PC-3 (cell line): ENCODE measurements at regions of chr5 and their contacts with region 1.

Region 1: GRCh38 chr5:40679155-40679913 is 381 bp upstream of the PTGER4 start:
- DNase-seq: peak; percentile 96
- ATAC-seq: peak; percentile 69
- H3K4me3 ChIP-seq: peak overlapping the region; percentile 90
- H3K27ac ChIP-seq: peak overlapping the region; percentile 92
- H3K4me1 ChIP-seq: peaks cover 39% of the 10 kb centered on the region
- H3K27me3 ChIP-seq: no peaks in the 10 kb centered on the region
- CTCF ChIP-seq: no peak

Region 2: DNA sequence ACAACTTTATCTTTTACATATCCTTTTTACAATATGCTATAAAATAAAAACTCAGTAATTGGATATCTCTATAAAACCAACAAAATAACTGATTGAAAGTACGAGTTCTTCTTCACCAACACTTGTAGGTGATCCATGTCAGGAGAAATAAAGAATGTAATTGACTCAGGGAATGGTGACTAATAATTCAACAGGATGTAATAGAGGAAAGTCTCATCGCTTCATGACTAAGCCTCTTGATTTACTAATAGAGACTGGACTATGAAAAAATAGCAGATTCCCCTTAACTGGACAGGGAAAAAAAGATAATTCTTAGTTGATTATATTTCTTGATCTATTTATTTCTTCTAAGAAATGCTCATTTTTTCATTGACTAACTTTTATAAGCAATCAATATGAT is 507.4 kb before region 1 on chr5:
- CTCF ChIA-PET with region 1: no interaction called
- POLR2A ChIA-PET with region 1: no interaction called
- intact Hi-C with region 1: loop called (anchors 2 kb)
- DNase-seq: peak; percentile 94
- ATAC-seq: peak; percentile 84
- H3K4me3 ChIP-seq: no peak overlapping the region
- H3K27ac ChIP-seq: peak overlapping the region; percentile 74
- H3K4me1 ChIP-seq: peaks cover 23% of the 10 kb centered on the region
- H3K27me3 ChIP-seq: no peaks in the 10 kb centered on the region
- CTCF ChIP-seq: no peak

Region 3: DNA sequence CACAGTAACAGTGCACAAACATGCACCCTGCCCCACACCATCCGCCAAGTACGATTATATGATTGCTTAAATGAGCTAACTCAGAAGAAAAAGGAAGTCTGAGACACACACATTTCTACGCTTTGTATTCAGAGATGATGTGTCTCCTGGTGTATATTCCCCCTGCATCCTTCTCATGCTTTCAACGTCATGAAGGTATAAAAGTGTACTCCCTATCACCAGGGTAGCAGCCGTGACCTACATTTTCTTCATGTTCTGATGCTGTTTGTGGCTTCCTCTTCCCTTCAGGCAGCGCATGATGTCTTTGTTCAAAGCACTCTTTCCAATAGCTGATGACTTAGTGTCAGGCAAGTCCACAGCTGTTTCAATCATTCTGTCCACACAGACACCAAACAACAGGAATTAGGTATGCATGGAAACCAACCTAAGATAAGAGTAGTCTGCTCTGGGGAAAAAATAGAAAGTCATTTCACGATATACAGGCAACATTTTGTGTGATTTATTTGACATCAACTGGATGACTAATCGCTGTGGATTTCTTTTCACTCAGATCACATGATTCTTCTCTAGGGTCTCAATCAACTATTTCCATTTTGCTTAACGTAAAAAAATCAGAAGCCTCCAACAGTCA is 269.0 kb before region 1 on chr5:
- CTCF ChIA-PET with region 1: no interaction called
- POLR2A ChIA-PET with region 1: interaction called, 10 read pairs
- intact Hi-C with region 1: loop called (anchors 10 kb)
- DNase-seq: peak; percentile 71
- ATAC-seq: peak; percentile 6; the same call in 1 of the 2 replicates
- H3K4me3 ChIP-seq: peak overlapping the region; percentile 23
- H3K27ac ChIP-seq: peak overlapping the region; percentile 90
- H3K4me1 ChIP-seq: peaks cover 34% of the 10 kb centered on the region
- H3K27me3 ChIP-seq: no peaks in the 10 kb centered on the region
- CTCF ChIP-seq: no peak

Region 4: GRCh38 chr5:40551496-40552491 is 127.5 kb before region 1 on chr5:
- CTCF ChIA-PET with region 1: no interaction called
- POLR2A ChIA-PET with region 1: interaction called, 3 read pairs
- intact Hi-C with region 1: loop called (anchors 2 kb)
- DNase-seq: peak; percentile 98
- ATAC-seq: peak; percentile 93
- H3K4me3 ChIP-seq: peak overlapping the region; percentile 44
- H3K27ac ChIP-seq: peak overlapping the region; percentile 92
- H3K4me1 ChIP-seq: peaks cover 41% of the 10 kb centered on the region
- H3K27me3 ChIP-seq: no peaks in the 10 kb centered on the region
- CTCF ChIP-seq: no peak

Region 5: GRCh38 chr5:40646286-40646685 is 33.0 kb before region 1 on chr5:
- CTCF ChIA-PET with region 1: no interaction called
- POLR2A ChIA-PET with region 1: no interaction called
- intact Hi-C with region 1: loop called (anchors 1 kb)
- DNase-seq: peak; percentile 33
- ATAC-seq: peak; percentile 51
- H3K4me3 ChIP-seq: no peak overlapping the region
- H3K27ac ChIP-seq: no peak overlapping the region
- H3K4me1 ChIP-seq: peaks cover 10% of the 10 kb centered on the region
- H3K27me3 ChIP-seq: no peaks in the 10 kb centered on the region
- CTCF ChIP-seq: no peak